Psoas muscle (tissue), 8 donors: ENCODE measurements at regions of chr22 and their contacts with region 1.

Region 1: GRCh38 chr22:28112548-28113043 is 193.5 kb upstream of the PITPNB start:
- DNase-seq: peak; percentile 59 to 80
- ATAC-seq: peak; percentile 77 to 95 (median 88)
- H3K4me3 ChIP-seq: peak overlapping the region; percentile 27
- H3K27ac ChIP-seq: peak overlapping the region; percentile 62
- H3K4me1 ChIP-seq: peaks cover 18% of the 10 kb centered on the region
- H3K27me3 ChIP-seq: no peaks in the 10 kb centered on the region
- CTCF ChIP-seq: peak; percentile 55

Region 2: GRCh38 chr22:28019881-28020871 is 92.4 kb before region 1 on chr22:
- intact Hi-C with region 1: loop called in 1 of 2 experiments (anchors 10 kb)
- DNase-seq: peak; percentile 82 to 90
- ATAC-seq: peak; percentile 71 to 82 (median 73)
- H3K4me3 ChIP-seq: no peak overlapping the region
- H3K27ac ChIP-seq: peak overlapping the region; percentile 91
- H3K4me1 ChIP-seq: peaks cover 48% of the 10 kb centered on the region
- H3K27me3 ChIP-seq: no peaks in the 10 kb centered on the region
- CTCF ChIP-seq: peak; percentile 97

Region 3: DNA sequence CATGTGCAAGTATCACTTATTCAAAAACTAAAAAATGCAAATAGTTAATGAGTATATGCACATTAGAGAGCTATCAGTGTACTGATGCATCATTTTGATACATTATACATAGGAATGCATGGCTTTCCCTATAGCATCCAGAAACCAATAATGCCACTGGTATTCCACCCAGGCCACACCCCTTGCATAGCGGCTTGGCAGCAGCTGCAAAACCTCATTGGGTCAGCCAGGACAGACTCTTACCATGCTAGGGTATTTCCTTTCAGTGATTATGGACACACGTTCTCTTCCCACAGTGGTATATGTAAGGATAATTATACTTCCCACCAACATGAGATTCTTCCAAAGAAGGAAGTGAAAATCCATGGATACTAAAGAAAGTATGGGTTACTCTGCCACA is 47.7 kb before region 1 on chr22:
- intact Hi-C with region 1: no loop called
- DNase-seq: no peak
- ATAC-seq: no peak
- H3K4me3 ChIP-seq: no peak overlapping the region
- H3K27ac ChIP-seq: no peak overlapping the region
- H3K4me1 ChIP-seq: no peaks in the 10 kb centered on the region
- H3K27me3 ChIP-seq: no peaks in the 10 kb centered on the region
- CTCF ChIP-seq: no peak